Calu3 (cell line): ENCODE measurements at regions of chr17 and their contacts with region 1.

Region 1: DNA sequence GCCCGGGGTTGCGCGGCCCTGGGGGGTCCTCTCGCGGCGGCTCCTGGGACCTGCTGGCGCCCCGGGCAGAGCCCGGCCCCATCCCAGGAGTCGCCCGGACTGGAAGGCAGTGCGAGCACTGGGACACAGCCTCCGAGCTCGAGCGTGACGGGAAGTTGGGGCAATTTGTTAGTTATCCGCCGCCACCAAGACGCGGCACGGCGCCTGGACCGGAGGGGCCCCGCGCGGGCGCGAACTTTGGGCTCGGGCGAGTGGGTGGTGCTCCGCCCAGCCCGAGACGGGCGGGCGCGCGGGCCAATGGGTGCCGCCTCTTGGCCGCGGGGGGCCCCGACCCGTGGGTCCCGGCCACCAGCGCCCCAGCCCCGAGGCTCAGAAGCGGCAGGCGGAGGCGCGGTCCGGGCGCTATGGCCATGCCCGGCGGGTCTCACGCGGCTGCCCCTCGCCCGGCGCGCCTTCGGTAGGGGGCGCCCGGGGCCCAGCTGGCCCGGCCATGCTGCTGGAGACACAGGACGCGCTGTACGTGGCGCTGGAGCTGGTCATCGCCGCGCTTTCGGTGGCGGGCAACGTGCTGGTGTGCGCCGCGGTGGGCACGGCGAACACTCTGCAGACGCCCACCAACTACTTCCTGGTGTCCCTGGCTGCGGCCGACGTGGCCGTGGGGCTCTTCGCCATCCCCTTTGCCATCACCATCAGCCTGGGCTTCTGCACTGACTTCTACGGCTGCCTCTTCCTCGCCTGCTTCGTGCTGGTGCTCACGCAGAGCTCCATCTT is at the start of gene ADORA2B:
- DNase-seq: peak; percentile 76
- H3K4me3 Mint-ChIP-seq: peak within 1 kb of the TSS; percentile 75
- H3K27ac Mint-ChIP-seq: peak within 1 kb of the TSS; percentile 71
- H3K4me1 Mint-ChIP-seq: peaks cover 8% of the 10 kb centered on the region
- H3K27me3 Mint-ChIP-seq: no peaks in the 10 kb centered on the region
- CTCF ChIP-seq: peak; percentile 43
- total RNA-seq, gene ADORA2B: 10.7 and 12.6 TPM in 2 replicates

Region 2: DNA sequence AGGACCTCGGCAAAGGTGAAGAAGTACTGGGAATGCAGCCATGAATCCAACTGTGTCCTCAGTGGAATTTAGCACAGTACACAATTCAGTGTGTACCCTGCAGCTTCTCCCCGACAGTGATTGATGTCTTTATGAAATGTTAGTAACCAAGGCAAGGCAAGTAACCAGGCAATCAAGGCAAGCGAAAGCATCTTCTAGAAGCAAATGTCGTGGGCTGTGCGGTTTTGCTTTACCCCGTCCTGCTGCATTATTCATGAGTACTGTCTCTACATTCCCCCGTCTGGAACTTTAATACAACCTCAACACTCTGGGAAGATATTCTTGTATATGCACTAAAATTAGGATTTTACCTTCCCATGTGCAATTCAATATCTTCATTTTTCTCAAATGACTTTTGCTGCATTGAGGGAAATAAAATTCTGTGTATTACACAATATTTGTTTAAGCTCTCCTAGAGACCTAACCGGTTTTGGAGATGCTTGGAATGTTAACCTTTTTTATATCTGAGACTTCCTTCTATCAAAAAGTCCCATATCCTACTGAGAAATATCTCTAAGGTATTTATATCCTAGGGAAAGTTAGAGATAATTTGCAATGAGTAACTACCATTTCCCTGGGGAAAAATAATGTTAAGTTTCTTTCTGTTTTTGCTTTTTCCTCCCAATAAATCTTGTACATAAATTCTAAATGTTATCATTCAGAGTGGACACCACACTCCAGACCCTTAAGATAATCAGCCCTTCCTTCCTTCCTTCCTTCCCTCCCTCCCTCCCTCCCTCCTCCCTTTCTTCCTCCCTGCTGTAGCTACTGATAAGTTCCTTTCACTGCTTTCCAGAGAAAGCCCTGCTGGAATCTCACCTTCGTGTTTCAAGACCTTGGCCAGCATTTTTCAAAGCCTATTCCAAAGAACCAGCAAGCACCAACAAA is 52.0 kb before region 1 on chr17:
- CTCF ChIA-PET with region 1: no interaction called
- intact Hi-C with region 1: loop called (anchors 10 kb)
- DNase-seq: peak; percentile 17
- H3K4me3 Mint-ChIP-seq: peak overlapping the region; percentile 27
- H3K27ac Mint-ChIP-seq: peak overlapping the region; percentile 90
- H3K4me1 Mint-ChIP-seq: peaks cover 53% of the 10 kb centered on the region
- H3K27me3 Mint-ChIP-seq: no peaks in the 10 kb centered on the region
- CTCF ChIP-seq: no peak

Region 3: GRCh38 chr17:15957608-15958307 is 12.8 kb after region 1 on chr17:
- CTCF ChIA-PET with region 1: interaction called, 11 read pairs
- intact Hi-C with region 1: no loop called
- DNase-seq: no peak
- H3K4me3 Mint-ChIP-seq: peak overlapping the region; percentile 35
- H3K27ac Mint-ChIP-seq: peak overlapping the region; percentile 88
- H3K4me1 Mint-ChIP-seq: peaks cover 42% of the 10 kb centered on the region
- H3K27me3 Mint-ChIP-seq: no peaks in the 10 kb centered on the region
- CTCF ChIP-seq: no peak

Region 4: GRCh38 chr17:15973016-15973415 is 28.1 kb after region 1 on chr17:
- CTCF ChIA-PET with region 1: no interaction called
- intact Hi-C with region 1: no loop called
- DNase-seq: no peak
- H3K4me3 Mint-ChIP-seq: no peak overlapping the region
- H3K27ac Mint-ChIP-seq: no peak overlapping the region
- H3K4me1 Mint-ChIP-seq: peaks cover 20% of the 10 kb centered on the region
- H3K27me3 Mint-ChIP-seq: no peaks in the 10 kb centered on the region
- CTCF ChIP-seq: no peak

Region 5: DNA sequence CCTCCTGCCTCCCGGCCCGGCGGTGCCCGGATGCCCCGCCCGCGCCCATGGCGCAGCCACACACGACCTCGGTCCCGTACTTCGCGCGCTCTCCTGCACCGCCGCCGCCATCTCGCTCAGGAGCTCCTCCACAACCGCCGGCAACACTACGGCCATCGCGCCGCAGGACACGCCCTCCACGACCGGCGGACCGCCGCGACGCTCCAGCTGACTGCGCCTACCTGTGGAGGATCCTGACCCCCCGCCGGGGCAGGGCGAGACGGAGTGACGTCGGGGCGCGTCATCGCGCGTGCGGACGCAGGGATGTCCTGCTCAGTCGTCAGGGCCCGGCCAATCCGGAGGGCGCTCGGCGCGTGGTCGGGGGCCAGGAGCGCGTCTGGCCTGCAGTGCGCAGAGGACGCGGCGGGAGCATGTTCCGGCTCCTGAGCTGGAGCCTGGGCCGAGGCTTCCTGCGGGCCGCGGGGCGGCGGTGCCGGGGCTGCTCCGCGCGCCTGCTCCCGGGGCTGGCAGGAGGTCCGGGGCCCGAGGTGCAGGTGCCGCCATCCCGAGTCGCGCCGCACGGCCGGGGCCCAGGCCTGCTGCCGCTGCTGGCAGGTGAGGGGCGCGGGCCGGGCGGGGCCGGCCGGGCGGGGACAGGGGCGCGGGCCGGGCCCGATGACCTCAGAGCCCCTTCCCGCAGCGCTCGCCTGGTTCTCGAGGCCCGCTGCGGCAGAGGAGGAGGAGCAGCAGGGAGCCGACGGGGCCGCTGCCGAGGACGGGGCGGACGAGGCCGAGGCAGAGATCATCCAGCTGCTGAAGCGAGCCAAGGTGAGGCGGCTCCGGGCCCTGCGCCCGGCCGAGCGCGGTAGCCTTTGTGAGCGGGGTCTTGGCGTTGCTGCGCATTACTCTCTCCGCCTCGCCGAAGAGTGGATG is 54.8 kb after region 1 on chr17 and contains the starts of genes TTC19 and ZSWIM7:
- CTCF ChIA-PET with region 1: interaction called, 34 read pairs
- intact Hi-C with region 1: loop called (anchors 1 kb)
- DNase-seq: peak; percentile 95
- H3K4me3 Mint-ChIP-seq: peak within 1 kb of the TSS; percentile 76
- H3K27ac Mint-ChIP-seq: peak within 1 kb of the TSS; percentile 89
- H3K4me1 Mint-ChIP-seq: peaks cover 16% of the 10 kb centered on the region
- H3K27me3 Mint-ChIP-seq: no peaks in the 10 kb centered on the region
- CTCF ChIP-seq: no peak
- total RNA-seq, gene TTC19: 30.3 and 31.6 TPM in 2 replicates
- total RNA-seq, gene ZSWIM7: 11.9 and 12.4 TPM in 2 replicates

Region 6: GRCh38 chr17:16085066-16085699 is 140.2 kb after region 1 on chr17:
- CTCF ChIA-PET with region 1: no interaction called
- intact Hi-C with region 1: no loop called
- DNase-seq: no peak
- H3K4me3 Mint-ChIP-seq: no peak overlapping the region
- H3K27ac Mint-ChIP-seq: no peak overlapping the region
- H3K4me1 Mint-ChIP-seq: no peaks in the 10 kb centered on the region
- H3K27me3 Mint-ChIP-seq: no peaks in the 10 kb centered on the region
- CTCF ChIP-seq: no peak